IMR-90 (cell line): ENCODE measurements at regions of chr3 and their contacts with region 1.

Region 1: DNA sequence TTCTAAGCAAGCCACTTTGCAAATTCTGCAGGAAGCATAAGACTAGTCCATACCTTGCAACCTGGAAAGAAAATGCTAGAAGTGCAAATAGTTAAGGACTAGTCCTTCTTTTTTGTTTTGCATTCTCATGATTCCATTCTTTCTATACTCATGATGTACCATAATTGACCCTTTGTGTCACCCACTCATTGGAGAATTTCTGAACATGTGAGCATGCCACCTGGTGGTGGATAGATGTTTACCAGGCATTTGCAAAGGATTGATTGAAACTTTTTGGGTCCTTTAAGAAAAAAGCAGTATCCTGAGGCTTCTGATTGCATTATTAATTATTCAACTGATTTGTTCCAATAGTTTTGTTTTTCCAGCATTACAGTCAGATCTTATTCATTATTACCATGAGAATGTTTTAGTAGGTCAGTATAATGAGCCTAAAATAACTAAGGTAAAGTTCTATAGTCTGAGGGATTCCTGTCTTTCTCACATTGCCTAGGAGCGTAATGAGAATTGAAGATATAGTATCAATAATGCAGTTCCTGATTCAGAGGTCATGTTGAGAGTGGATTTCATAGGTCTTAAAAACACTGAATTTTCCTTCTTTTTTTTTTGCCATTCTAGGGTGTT is 20.2 kb upstream of the DIPK2A start:
- DNase-seq: peak; percentile 46
- ATAC-seq: peak; percentile 48; the same call in 1 of the 2 replicates
- H3K4me3 ChIP-seq: no peak overlapping the region
- H3K27ac ChIP-seq: no peak overlapping the region
- H3K4me1 ChIP-seq: no peaks in the 10 kb centered on the region
- H3K27me3 ChIP-seq: no peaks in the 10 kb centered on the region
- CTCF ChIP-seq: peak; percentile 58
- POLR2A ChIP-seq: no peak
- RAD21 ChIP-seq: peak; percentile 38; the same call in 1 of the 2 replicates

Region 2: GRCh38 chr3:143775459-143775858 is 176.0 kb before region 1 on chr3:
- CTCF ChIA-PET with region 1: no interaction called
- POLR2A ChIA-PET with region 1: no interaction called
- dilution Hi-C with region 1: no loop called
- in situ Hi-C with region 1: loop called (anchors 10 kb)
- intact Hi-C with region 1: loop called (anchors 1 kb)
- DNase-seq: peak; percentile 13
- ATAC-seq: peak; percentile 87
- H3K4me3 ChIP-seq: no peak overlapping the region
- H3K27ac ChIP-seq: no peak overlapping the region
- H3K4me1 ChIP-seq: no peaks in the 10 kb centered on the region; the same call in 1 of the 2 replicates
- H3K27me3 ChIP-seq: no peaks in the 10 kb centered on the region
- CTCF ChIP-seq: peak; percentile 56
- POLR2A ChIP-seq: no peak
- RAD21 ChIP-seq: peak; percentile 63

Region 3: GRCh38 chr3:143885780-143886427 is 65.6 kb before region 1 on chr3:
- CTCF ChIA-PET with region 1: no interaction called
- POLR2A ChIA-PET with region 1: no interaction called
- dilution Hi-C with region 1: no loop called
- in situ Hi-C with region 1: no loop called
- intact Hi-C with region 1: loop called (anchors 2 kb)
- DNase-seq: peak; percentile 34
- ATAC-seq: peak; percentile 81
- H3K4me3 ChIP-seq: no peak overlapping the region
- H3K27ac ChIP-seq: no peak overlapping the region
- H3K4me1 ChIP-seq: no peaks in the 10 kb centered on the region
- H3K27me3 ChIP-seq: no peaks in the 10 kb centered on the region; the same call in 1 of the 2 replicates
- CTCF ChIP-seq: peak; percentile 66
- POLR2A ChIP-seq: no peak
- RAD21 ChIP-seq: peak; percentile 57

Region 4: GRCh38 chr3:143895805-143896204 is 55.7 kb before region 1 on chr3:
- CTCF ChIA-PET with region 1: interaction called, 3 read pairs
- POLR2A ChIA-PET with region 1: no interaction called
- dilution Hi-C with region 1: no loop called
- in situ Hi-C with region 1: no loop called
- intact Hi-C with region 1: loop called (anchors 1 kb)
- DNase-seq: peak; percentile 2
- ATAC-seq: no peak
- H3K4me3 ChIP-seq: no peak overlapping the region
- H3K27ac ChIP-seq: no peak overlapping the region
- H3K4me1 ChIP-seq: no peaks in the 10 kb centered on the region
- H3K27me3 ChIP-seq: peaks cover 5% of the 10 kb centered on the region
- CTCF ChIP-seq: peak; percentile 50
- POLR2A ChIP-seq: no peak
- RAD21 ChIP-seq: peak; percentile 57